Head of caudate nucleus (tissue), 42 donors: ENCODE measurements at regions of chr3 and their contacts with region 1.

Region 1: DNA sequence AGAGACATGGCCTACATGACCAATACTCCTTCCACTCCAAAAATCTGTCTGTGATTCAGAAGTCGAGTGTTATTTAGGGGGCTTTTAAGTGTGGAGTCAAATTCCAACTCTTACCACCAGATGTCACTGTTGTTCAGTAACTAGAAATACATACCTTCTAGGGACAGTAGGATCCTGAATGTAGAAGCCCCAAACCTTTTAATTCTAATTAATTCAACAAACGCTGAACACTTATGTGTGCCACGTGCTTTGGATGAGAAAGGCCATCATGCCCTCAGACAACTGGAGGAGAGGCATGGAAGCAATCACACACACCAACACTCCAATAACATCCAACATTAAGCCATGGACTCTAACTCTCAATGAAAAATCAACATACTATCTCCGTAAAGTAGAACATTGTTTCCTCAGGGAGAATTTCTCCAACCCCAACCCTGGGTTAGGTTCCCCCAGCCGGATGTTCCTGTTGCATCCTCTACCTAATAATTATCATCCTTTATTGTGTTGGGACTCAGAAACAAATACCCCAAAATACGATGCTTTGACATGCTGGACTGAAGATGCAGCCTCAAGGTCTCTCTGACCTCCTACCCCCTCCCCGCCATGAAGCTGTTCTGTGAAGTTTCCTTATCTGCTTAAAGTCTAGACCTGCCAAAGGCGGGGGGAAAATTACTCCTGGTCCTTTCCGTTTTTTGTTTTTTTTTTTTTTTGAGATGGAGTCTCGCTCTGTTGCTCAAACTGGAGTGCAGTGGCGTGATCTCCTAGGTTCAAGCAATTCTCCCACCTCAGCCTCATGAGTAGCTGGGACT is 8.0 kb upstream of the CCDC13 start:
- DNase-seq: peak in 7 of 42 donors; percentile 23 to 70 (median 43)

Region 2: GRCh38 chr3:42839616-42840015 is 58.5 kb after region 1 on chr3:
- intact Hi-C with region 1: loop called (anchors 5 kb)
- DNase-seq: peak in 39 of 42 donors; percentile 17 to 80 (median 50)